ENCODE measurements at regions of chr17 and their contacts with region 1.

Region 1: GRCh38 chr17:29838961-29839360 is 91.1 kb downstream of the SSH2 start:
- DNase-seq: no peak
- ATAC-seq: no peak
- H3K4me3 ChIP-seq: no peak overlapping the region
- H3K27ac ChIP-seq: no peak overlapping the region
- H3K4me1 ChIP-seq: no peaks in the 10 kb centered on the region
- H3K27me3 ChIP-seq: no peaks in the 10 kb centered on the region
- CTCF ChIP-seq: no peak
- EP300 ChIP-seq: no peak
- POLR2A ChIP-seq: no peak
- RAD21 ChIP-seq: no peak

Region 2: DNA sequence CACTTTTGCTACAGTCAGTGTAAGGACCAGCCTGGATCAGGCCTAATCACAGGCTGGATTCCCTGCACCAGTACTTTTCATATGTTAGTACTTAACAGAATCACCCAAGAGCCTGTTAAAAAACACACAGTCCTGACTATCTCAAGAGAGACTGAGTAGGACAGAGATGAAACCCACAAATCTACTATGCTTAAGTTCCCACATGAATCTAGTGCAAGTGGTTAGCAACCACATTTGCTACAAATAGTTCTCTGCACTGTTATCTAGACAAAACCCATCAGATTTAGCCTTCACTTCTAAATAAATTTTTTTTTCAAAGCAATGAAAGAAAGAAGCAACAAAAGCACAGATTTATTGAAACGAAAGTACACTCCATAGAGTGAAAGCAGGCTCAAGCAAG is 52.2 kb after region 1 on chr17:
- CTCF ChIA-PET with region 1: no interaction called
- POLR2A ChIA-PET with region 1: no interaction called
- in situ Hi-C with region 1: loop called (anchors 10 kb)
- intact Hi-C with region 1: no loop called
- DNase-seq: no peak
- ATAC-seq: no peak
- H3K4me3 ChIP-seq: no peak overlapping the region
- H3K27ac ChIP-seq: no peak overlapping the region
- H3K4me1 ChIP-seq: peaks cover 9% of the 10 kb centered on the region
- H3K27me3 ChIP-seq: no peaks in the 10 kb centered on the region
- CTCF ChIP-seq: no peak
- EP300 ChIP-seq: no peak
- POLR2A ChIP-seq: no peak
- RAD21 ChIP-seq: no peak